IMR-90 (cell line): ENCODE measurements at regions of chr11 and their contacts with region 1.

Region 1: GRCh38 chr11:46278387-46279125 is 1.1 kb downstream of the CREB3L1 start:
- DNase-seq: peak; percentile 59
- ATAC-seq: peak; percentile 65
- H3K4me3 ChIP-seq: peak overlapping the region; percentile 86
- H3K27ac ChIP-seq: peak overlapping the region; percentile 98
- H3K4me1 ChIP-seq: peaks cover 25% of the 10 kb centered on the region
- H3K27me3 ChIP-seq: no peaks in the 10 kb centered on the region
- CTCF ChIP-seq: peak; percentile 77
- POLR2A ChIP-seq: no peak; the same call in 1 of the 2 replicates
- RAD21 ChIP-seq: peak; percentile 67

Region 2: DNA sequence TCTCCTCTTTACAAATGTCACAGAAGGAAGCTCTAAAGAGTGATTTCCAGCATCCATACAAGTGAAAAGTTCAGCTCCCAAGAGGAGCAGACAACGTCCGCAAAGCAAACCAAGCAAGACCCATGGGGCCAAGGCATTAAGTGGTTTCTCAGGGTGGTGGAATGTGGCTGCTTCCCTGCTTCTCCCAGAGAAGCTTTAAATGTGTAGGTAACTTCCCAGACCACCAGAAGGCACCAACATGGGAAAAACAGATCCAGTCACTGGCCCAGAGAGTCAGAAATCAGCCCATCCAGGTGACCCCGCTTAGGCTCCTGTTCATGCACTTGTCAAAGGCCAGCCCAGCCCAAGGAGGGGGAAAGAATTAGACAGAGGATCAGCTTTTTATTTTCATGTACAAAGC is 144.0 kb before region 1 on chr11:
- CTCF ChIA-PET with region 1: no interaction called
- POLR2A ChIA-PET with region 1: interaction called, 10 read pairs
- dilution Hi-C with region 1: no loop called
- in situ Hi-C with region 1: no loop called
- intact Hi-C with region 1: no loop called
- DNase-seq: no peak
- ATAC-seq: no peak
- H3K4me3 ChIP-seq: no peak overlapping the region
- H3K27ac ChIP-seq: no peak overlapping the region
- H3K4me1 ChIP-seq: no peaks in the 10 kb centered on the region
- H3K27me3 ChIP-seq: peaks cover 22% of the 10 kb centered on the region
- CTCF ChIP-seq: no peak
- POLR2A ChIP-seq: no peak
- RAD21 ChIP-seq: no peak

Region 3: GRCh38 chr11:46295312-46296058 is 16.9 kb after region 1 on chr11:
- CTCF ChIA-PET with region 1: interaction called, 31 read pairs
- POLR2A ChIA-PET with region 1: interaction called, 14 read pairs
- dilution Hi-C with region 1: no loop called
- in situ Hi-C with region 1: no loop called
- intact Hi-C with region 1: loop called (anchors 1 kb)
- DNase-seq: peak; percentile 72
- ATAC-seq: peak; percentile 40
- H3K4me3 ChIP-seq: peak overlapping the region; percentile 41
- H3K27ac ChIP-seq: peak overlapping the region; percentile 98
- H3K4me1 ChIP-seq: peaks cover 68% of the 10 kb centered on the region
- H3K27me3 ChIP-seq: no peaks in the 10 kb centered on the region
- CTCF ChIP-seq: no peak
- POLR2A ChIP-seq: peak; percentile 17; the same call in 1 of the 2 replicates
- RAD21 ChIP-seq: no peak

Region 4: DNA sequence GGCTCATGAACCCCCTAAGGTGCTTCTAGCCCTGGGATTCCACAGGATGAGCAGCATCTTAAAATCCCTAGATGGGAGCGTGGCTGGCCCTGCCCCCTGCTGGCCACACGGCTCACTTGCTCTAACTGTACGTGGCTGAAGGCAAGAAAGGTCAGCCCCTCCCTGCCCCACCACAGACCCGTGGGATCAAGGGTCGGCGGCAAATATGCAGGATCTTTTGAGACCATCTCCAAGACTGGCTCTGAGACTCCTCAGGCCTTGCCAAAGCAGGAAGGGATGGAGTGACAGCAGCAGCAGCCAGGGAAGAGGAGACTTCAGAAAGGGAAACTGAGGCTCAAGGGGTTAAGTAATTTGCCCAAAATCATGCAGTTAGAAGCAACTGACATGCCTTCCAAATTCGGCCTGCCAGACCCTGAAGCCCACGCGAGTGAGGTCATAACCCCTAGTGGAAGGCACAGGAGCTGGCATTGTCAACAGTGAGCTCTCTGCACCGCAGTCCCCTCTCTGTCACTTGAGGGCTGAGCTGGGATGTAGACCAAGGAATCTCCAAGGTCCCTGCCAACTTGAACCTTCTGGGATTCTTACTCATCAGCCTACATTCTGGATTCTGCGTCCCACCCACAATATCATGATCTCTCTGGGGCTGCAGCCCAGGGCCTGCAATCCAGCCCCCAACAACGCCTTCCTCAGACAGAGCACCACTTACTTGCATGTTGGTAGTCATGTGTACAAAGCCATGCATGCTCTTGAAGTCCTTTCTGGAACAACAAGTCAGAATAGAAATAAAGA is 30.3 kb after region 1 on chr11:
- CTCF ChIA-PET with region 1: interaction called, 5 read pairs
- POLR2A ChIA-PET with region 1: interaction called, 8 read pairs
- dilution Hi-C with region 1: no loop called
- in situ Hi-C with region 1: no loop called
- intact Hi-C with region 1: loop called (anchors 2 kb)
- DNase-seq: peak; percentile 61
- ATAC-seq: peak; percentile 84
- H3K4me3 ChIP-seq: no peak overlapping the region
- H3K27ac ChIP-seq: no peak overlapping the region
- H3K4me1 ChIP-seq: peaks cover 11% of the 10 kb centered on the region
- H3K27me3 ChIP-seq: no peaks in the 10 kb centered on the region
- CTCF ChIP-seq: peak; percentile 81
- POLR2A ChIP-seq: peak; percentile 37; the same call in 1 of the 2 replicates
- RAD21 ChIP-seq: peak; percentile 89

Region 5: DNA sequence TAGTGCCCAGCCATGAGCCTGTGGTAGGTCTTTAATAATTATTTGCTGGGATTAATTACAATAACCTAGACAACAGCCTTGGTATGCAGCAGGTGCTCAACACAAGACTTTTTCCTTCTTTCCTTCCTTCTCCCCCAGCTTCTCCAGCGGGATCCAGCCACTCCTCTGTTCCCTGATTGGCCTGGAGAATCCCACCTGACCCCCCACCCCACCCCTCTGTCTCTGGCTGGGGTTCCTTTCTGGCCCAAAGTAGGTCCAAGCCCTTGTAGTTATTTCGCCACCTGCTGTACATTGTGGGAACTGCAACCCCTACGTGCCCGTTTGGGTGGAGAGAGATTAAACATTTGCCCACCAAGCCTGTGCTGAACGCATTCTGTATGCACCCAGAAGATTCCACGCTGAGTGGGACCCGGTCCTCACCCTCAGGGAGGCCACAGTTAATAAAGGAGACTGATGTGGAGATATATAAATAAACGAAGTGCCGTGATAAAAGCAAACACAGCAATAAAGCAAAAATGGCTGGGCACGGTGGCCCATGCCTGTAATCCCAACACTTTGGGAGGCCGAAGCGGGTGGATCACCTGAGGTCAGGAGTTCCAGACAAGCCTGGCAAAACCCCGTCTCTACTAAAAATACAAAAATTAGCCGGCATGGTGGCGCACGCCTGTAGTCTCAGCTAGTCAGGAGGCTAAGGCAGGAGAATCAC is 36.6 kb after region 1 on chr11:
- CTCF ChIA-PET with region 1: no interaction called
- POLR2A ChIA-PET with region 1: no interaction called
- dilution Hi-C with region 1: no loop called
- in situ Hi-C with region 1: no loop called
- intact Hi-C with region 1: loop called (anchors 1 kb)
- DNase-seq: peak; percentile 71
- ATAC-seq: peak; percentile 88
- H3K4me3 ChIP-seq: no peak overlapping the region
- H3K27ac ChIP-seq: no peak overlapping the region
- H3K4me1 ChIP-seq: no peaks in the 10 kb centered on the region
- H3K27me3 ChIP-seq: no peaks in the 10 kb centered on the region
- CTCF ChIP-seq: peak; percentile 75
- POLR2A ChIP-seq: no peak
- RAD21 ChIP-seq: peak; percentile 73

Region 6: GRCh38 chr11:46472670-46472994 is 194.1 kb after region 1 on chr11:
- CTCF ChIA-PET with region 1: no interaction called
- POLR2A ChIA-PET with region 1: no interaction called
- dilution Hi-C with region 1: no loop called
- in situ Hi-C with region 1: no loop called
- intact Hi-C with region 1: no loop called
- DNase-seq: no peak
- ATAC-seq: no peak
- H3K4me3 ChIP-seq: no peak overlapping the region
- H3K27ac ChIP-seq: no peak overlapping the region
- H3K4me1 ChIP-seq: no peaks in the 10 kb centered on the region
- H3K27me3 ChIP-seq: no peaks in the 10 kb centered on the region
- CTCF ChIP-seq: no peak
- POLR2A ChIP-seq: no peak
- RAD21 ChIP-seq: no peak